ENCODE measurements at regions of chr3 and their contacts with region 1.

Region 1: GRCh38 chr3:188954590-188955208 is 217.1 kb upstream of the TPRG1 start:
- DNase-seq: peak; percentile 85
- H3K4me3 Mint-ChIP-seq: no peak overlapping the region
- H3K27ac Mint-ChIP-seq: no peak overlapping the region
- H3K4me1 Mint-ChIP-seq: peaks cover 28% of the 10 kb centered on the region
- H3K27me3 Mint-ChIP-seq: peaks cover 4% of the 10 kb centered on the region

Region 2: DNA sequence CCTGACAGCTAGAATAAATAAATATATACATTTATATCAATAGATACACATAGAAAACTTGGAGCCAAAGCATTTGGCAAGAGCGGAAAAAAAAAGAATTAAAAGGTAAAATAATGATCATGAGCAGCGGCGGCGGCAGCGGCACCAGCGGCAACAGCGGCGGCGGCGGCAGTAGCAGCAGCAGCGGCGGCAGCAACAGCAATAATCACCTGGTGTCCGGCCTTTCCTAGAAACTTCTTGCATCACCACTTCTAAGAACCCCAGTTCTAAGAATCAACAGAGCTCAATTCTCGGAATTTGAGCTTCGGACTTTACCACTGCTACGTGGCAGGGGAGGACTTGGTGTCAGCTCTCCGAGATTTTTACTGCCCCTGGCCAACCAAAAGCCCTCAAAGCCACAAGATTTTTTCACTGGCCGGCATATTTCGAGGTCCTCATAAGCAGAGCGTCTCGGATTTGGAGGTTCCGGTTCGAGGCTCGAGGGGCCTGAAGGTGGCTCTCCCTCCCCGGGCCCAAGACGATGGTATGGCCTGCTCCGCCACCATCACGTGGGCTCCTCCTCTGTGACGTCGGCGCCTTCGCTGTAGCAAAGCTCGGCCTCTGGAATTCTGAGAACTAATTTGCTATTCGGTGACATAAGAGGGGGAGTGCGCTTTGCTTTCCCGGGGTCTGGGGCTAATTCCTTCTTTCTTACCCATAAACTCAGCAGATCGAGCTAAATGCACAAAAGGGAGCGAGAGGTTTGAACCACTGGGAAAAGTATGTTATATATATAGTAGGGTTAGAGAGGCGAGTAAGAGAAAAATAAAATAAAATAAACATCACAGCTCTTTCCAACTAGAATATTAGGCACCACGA is 1209.3 kb before region 1 on chr3 and contains the start of gene BCL6:
- CTCF ChIA-PET with region 1: interaction called, 378 read pairs
- POLR2A ChIA-PET with region 1: interaction called, 21 read pairs
- intact Hi-C with region 1: no loop called
- DNase-seq: peak; percentile 91
- H3K4me3 Mint-ChIP-seq: peak within 1 kb of the TSS; percentile 90
- H3K27ac Mint-ChIP-seq: peak within 1 kb of the TSS; percentile 99
- H3K4me1 Mint-ChIP-seq: peaks cover 47% of the 10 kb centered on the region
- H3K27me3 Mint-ChIP-seq: no peaks in the 10 kb centered on the region
- total RNA-seq, gene BCL6: 41.4 to 51.3 TPM

Region 3: DNA sequence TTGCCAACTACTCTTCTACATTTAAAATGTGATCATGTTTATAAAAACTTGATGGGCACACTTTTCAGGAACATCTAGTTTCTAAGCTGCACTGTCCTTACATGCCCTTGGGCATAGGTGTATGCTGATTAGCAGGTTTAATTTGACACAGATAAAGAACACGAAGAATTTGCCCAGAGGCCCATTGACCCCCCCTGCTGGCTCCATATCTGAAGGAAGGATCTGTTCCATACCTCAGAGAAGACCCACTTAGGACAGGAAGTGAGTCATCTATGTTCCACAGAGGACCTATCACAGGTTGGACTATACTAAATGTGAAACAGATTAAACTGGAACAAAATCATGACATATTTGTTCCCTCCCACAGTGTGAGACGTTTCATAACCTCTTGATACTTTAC is 893.6 kb before region 1 on chr3:
- CTCF ChIA-PET with region 1: no interaction called
- POLR2A ChIA-PET with region 1: no interaction called
- intact Hi-C with region 1: loop called (anchors 10 kb)
- DNase-seq: peak; percentile 81
- H3K4me3 Mint-ChIP-seq: peak overlapping the region; percentile 44
- H3K27ac Mint-ChIP-seq: peak overlapping the region; percentile 80
- H3K4me1 Mint-ChIP-seq: peaks cover 35% of the 10 kb centered on the region
- H3K27me3 Mint-ChIP-seq: no peaks in the 10 kb centered on the region

Region 4: DNA sequence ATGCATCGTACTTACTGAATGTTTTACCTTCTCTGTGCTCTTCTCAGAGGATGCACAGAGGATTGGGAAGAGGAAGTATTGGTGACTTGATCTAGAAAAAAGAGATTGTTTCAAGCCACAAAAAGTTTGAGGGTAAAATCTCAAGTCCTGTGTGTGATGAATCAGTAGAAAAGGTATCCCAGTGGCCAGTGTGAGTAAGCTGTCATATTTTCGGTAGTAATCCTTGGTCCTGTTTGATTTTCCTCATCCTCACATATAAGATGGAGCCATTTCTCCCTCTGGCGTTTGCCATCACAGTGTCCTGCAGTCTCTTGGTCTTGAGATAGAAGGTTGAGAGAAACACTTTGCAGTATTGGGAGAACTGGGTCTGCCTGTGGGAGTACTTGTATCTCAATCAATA is 633.9 kb before region 1 on chr3:
- CTCF ChIA-PET with region 1: no interaction called
- POLR2A ChIA-PET with region 1: no interaction called
- intact Hi-C with region 1: loop called (anchors 5 kb)
- DNase-seq: no peak
- H3K4me3 Mint-ChIP-seq: no peak overlapping the region
- H3K27ac Mint-ChIP-seq: no peak overlapping the region
- H3K4me1 Mint-ChIP-seq: peaks cover 58% of the 10 kb centered on the region
- H3K27me3 Mint-ChIP-seq: peaks cover 2% of the 10 kb centered on the region

Region 5: DNA sequence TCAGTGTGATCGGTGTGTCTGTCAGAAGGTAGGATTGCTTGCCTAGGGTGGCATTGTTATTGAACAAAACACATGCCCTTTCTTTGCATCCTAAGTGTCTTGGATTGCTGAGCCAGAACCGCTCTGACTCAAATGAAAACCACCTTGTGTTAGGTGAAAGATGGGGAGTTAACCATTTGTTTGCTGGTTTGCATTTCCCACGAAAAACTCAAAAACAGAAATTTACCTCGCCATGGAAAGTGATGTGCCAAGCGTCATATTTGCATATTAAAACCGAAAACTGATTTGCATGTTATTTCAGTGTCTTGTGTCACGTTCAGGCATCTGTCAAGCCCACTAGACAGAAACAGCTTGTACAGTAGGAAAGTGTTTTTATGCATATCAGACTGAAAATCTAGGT is 257.6 kb before region 1 on chr3:
- CTCF ChIA-PET with region 1: interaction called, 3 read pairs
- POLR2A ChIA-PET with region 1: interaction called, 3 read pairs
- intact Hi-C with region 1: loop called (anchors 5 kb)
- DNase-seq: peak; percentile 55
- H3K4me3 Mint-ChIP-seq: no peak overlapping the region
- H3K27ac Mint-ChIP-seq: peak overlapping the region; percentile 7
- H3K4me1 Mint-ChIP-seq: peaks cover 50% of the 10 kb centered on the region
- H3K27me3 Mint-ChIP-seq: peaks cover 7% of the 10 kb centered on the region

Region 6: DNA sequence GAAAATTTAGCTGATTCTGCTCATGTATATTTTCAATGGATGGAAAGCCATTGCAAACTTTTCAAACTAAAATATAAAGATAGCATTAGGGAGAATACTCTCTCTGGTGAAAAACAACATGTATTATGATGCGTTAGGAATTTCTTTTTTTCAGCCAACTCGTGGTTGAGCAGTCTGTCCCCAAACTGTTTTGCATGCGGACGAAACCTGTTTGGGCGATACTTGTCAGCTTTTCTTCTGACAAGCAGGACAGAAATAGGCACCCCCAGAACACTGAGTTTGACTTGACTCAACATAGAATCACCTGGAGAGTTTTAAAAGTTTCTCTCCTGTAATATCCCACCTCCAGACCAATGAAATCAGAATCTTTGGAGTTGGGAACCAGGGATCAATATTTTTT is 200.4 kb before region 1 on chr3:
- CTCF ChIA-PET with region 1: interaction called, 23 read pairs
- POLR2A ChIA-PET with region 1: no interaction called
- intact Hi-C with region 1: loop called (anchors 1 kb)
- DNase-seq: no peak
- H3K4me3 Mint-ChIP-seq: no peak overlapping the region
- H3K27ac Mint-ChIP-seq: no peak overlapping the region
- H3K4me1 Mint-ChIP-seq: peaks cover 24% of the 10 kb centered on the region
- H3K27me3 Mint-ChIP-seq: no peaks in the 10 kb centered on the region

Region 7: DNA sequence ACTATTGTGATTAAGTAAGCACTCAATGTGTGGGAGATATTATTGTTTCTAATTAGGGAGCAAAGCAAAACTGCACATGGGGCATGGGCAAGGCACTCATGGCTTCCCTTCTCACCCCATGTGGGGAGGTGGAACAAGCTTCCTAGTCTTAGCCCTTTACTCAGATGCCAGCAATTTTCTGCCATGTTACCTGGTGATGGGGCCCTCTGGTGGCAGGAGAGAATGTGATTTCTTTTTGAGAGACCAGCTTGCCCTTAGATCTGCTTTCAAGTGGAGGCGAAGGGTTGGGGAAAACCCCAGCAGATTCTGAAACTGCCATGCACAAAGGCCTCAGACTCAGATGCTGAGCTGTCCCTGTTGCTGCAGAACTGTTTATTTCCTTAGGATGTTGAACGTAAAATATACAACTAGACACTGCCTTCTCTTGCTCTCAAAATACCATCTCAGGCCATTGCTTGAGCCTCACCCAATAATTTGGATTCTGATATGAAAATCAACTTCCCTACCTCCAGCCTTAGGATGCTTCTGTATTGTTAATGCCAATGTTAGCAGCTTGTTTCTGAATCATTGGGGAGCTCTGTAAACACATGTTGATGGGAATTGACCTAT is 86.9 kb after region 1 on chr3:
- CTCF ChIA-PET with region 1: interaction called, 72 read pairs
- POLR2A ChIA-PET with region 1: no interaction called
- intact Hi-C with region 1: loop called (anchors 2 kb)
- DNase-seq: peak; percentile 86
- H3K4me3 Mint-ChIP-seq: no peak overlapping the region
- H3K27ac Mint-ChIP-seq: peak overlapping the region; percentile 23
- H3K4me1 Mint-ChIP-seq: peaks cover 37% of the 10 kb centered on the region
- H3K27me3 Mint-ChIP-seq: no peaks in the 10 kb centered on the region

Measured in activated CD4-positive, alpha-beta memory T cell treated with anti-CD3 and anti-CD28 coated beads for 36 hours (primary cell).